Spleen (tissue), 13 donors: ENCODE measurements at regions of chr2 and their contacts with region 1.

Region 1: DNA sequence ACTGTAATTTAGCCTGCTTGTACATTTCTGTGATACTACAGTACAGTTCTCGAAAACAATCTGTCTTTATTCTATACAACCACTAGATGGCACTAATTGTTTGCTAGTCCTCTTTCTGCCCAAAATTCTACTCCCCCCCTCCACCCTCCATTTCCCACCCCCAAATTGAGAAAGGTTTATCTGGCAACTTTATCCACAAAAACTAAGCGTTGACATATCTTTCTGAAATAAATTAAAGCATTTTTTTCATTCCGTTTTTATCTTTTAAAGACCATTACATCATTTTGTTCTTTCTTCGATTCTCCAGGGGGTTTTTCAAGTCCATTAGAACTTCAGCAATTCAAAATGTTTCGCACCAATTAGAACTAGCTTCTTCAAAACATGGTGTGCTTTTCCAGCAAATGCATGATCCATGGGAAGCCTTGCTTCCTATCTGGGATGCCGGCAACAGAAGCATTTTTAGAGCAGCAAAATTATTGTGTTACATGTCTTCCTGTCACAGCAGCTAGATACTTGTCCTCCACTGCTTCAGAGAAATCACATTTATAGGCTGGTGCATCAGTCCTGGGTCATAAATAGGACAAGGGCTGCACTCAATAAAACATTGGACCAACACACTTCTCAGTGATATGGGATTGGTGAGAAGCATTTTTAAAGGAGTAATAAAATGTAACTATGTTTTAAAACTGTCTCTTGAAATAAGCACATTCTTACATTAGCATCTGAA is 241.3 kb downstream of the PAX3 start:
- DNase-seq: no peak
- H3K4me3 ChIP-seq: no peak overlapping the region
- H3K27ac ChIP-seq: no peak overlapping the region
- H3K4me1 ChIP-seq: no peaks in the 10 kb centered on the region
- H3K27me3 ChIP-seq: peaks cover 0 to 71% (median 8%) of the 10 kb centered on the region in 7 donors
- CTCF ChIP-seq: peak in 8 of 11 experiments; percentile 5 to 48 (median 32)
- POLR2A ChIP-seq: no peak

Region 2: DNA sequence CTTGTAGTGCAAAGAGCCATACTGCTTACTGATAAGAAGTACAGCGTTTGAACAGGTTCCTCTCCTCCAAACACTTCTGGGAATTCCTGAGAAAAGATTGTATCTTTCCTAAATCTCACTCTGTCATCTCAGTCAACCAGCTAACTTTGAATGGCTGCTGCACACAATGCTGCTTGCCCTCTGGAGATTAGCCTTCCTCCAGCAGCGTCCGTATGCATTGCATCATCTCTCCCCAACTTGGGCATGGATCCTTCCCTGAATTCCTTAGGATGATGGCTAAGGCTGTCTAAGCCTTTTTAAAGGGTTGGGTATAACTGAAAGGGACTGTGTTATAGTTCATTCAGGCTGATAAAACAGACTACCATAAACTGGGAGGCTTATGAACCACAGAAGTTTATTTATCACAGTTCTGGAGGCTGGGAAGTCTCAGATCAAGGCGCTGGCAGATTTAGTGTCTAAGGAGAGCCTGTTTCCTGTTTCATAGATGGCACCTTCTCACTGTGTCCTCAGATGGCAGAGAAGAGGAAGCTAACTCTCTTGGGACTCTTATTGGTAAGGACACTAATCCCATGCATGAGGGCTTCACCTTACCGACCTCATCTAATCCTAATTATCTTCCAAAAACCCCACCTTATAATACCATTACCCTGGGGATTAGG is 135.9 kb after region 1 on chr2:
- intact Hi-C with region 1: no loop called
- DNase-seq: no peak
- H3K4me3 ChIP-seq: no peak overlapping the region
- H3K27ac ChIP-seq: no peak overlapping the region
- H3K4me1 ChIP-seq: no peaks in the 10 kb centered on the region
- H3K27me3 ChIP-seq: no peaks in the 10 kb centered on the region
- CTCF ChIP-seq: no peak
- POLR2A ChIP-seq: no peak

Region 3: DNA sequence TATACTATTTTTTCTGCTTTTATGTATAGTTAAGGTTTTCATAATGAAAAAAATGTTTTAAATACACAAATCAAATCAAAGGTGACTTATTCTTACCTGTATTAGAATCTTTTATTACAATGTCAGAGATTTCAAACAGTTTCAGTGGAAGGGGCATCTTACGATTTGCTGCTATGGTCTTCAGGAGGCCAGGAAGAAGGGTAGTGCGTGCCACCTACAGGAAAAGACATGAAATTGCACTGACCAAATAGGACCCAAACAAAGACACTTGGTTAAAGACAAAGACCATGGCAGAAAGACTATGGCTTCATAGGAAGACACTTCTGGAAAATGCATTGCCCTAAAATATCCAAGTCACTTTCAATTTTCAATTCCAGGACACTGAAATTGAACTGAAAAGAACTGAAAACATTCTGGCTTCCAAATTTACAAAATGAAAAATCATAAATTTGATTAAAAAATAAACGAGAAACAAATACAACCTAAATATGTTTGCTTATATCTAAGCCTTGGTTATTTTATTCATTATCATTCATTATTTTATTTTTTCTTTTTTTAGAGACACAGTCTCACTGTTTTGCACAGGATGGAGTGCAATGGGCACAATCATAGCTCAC is 556.3 kb after region 1 on chr2:
- intact Hi-C with region 1: loop called (anchors 10 kb)
- DNase-seq: no peak
- H3K4me3 ChIP-seq: no peak overlapping the region
- H3K27ac ChIP-seq: no peak overlapping the region
- H3K4me1 ChIP-seq: no peaks in the 10 kb centered on the region
- H3K27me3 ChIP-seq: no peaks in the 10 kb centered on the region
- CTCF ChIP-seq: peak in 10 of 11 experiments; percentile 21 to 74 (median 65)
- POLR2A ChIP-seq: no peak